Body of pancreas (tissue), 4 donors: ENCODE measurements at regions of chr16 and their contacts with region 1.

Region 1: DNA sequence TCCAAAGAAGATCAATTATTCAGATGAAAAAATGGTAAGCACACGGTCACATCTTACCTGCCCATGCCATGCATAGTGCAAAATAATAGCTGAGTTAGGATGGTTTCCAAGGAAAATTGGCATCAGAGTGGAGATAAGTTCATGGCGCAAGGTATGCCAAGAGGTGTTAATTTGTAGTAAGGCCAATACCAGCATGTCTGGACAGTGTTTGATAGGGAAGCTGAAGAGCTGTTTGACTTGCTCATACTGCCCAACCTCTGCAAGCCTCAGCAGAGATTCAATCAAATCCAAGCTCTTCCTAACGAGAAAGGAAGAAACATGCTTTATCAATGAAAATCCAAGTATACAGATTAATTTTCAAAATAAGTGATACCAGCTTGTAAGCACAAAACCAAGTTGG is 51.0 kb downstream of the CNOT1 start:
- DNase-seq: no peak
- ATAC-seq: no peak
- H3K4me3 ChIP-seq: no peak overlapping the region
- H3K27ac ChIP-seq: no peak overlapping the region
- H3K4me1 ChIP-seq: no peaks in the 10 kb centered on the region
- H3K27me3 ChIP-seq: no peaks in the 10 kb centered on the region
- CTCF ChIP-seq: no peak
- POLR2A ChIP-seq: no peak

Region 2: DNA sequence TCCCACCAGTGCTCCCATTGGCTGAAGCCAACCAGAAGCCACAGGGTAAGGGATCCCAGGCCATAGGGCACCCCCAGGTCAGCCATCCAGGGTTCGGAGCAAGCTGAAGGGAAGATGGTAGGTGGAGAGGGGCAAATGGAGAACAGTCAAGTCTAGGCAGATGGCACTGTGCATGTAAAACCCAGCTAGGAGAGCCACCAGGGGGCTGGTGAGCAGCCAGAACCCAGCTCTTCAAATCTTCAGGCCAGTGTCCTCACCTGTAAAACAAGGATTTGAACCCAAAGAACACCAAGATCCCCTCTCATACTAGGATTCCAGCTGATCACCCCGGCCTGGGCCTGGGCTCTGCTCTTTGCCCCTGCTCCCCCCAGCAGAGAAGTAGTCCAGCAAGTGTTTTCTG is 142.9 kb before region 1 on chr16:
- intact Hi-C with region 1: no loop called
- DNase-seq: no peak
- ATAC-seq: no peak
- H3K4me3 ChIP-seq: no peak overlapping the region
- H3K27ac ChIP-seq: no peak overlapping the region
- H3K4me1 ChIP-seq: no peaks in the 10 kb centered on the region
- H3K27me3 ChIP-seq: no peaks in the 10 kb centered on the region
- CTCF ChIP-seq: no peak
- POLR2A ChIP-seq: no peak

Region 3: DNA sequence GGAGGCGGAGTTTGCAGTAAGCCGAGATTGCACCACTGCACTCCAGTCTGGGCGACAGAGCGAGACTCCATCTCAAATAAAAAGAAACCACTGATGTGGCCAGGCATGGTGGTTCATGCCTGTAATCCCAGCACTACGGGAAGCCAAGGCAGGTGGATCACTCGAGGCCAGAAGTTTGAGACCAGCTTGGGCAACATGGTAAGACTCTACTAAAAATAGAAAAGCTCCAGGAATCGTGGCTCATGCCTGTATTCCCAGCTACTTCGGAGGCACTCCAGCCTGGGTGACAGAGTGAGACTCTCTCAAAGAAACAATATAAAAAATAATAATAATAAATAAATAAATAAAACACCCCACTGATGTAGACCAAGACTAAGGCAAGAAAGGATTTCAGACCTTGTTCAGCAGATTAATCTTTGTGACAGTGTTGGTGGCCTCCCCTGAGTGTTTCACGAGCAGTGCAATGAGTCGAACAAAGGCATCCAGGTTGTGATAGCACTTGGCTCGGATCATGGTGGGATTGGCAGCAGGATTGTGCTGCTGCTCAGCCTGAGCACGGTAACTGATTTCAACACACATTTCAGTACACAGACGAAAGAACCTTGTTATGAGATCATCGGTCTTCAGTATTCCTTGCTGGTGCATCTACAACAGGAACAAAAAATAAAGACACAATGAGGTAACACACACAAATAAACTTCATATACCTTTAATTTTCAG is 44.7 kb before region 1 on chr16:
- intact Hi-C with region 1: loop called (anchors 5 kb)
- DNase-seq: no peak
- ATAC-seq: no peak
- H3K4me3 ChIP-seq: no peak overlapping the region
- H3K27ac ChIP-seq: no peak overlapping the region
- H3K4me1 ChIP-seq: peaks cover 7% of the 10 kb centered on the region
- H3K27me3 ChIP-seq: no peaks in the 10 kb centered on the region
- CTCF ChIP-seq: no peak
- POLR2A ChIP-seq: no peak